Activated CD4-positive, alpha-beta T cell treated with anti-CD3 and anti-CD28 coated beads, Interleukin-2, amount 10 ng/mL, durations not matched to agents 7 days and 5 days (primary cell): ENCODE measurements at regions of chrX and their contacts with region 1.

Region 1: GRCh38 chrX:154373340-154374306 is 811 bp downstream of the FLNA start:
- DNase-seq: peak; percentile 37
- H3K4me3 Mint-ChIP-seq: peak overlapping the region; percentile 76
- H3K27ac Mint-ChIP-seq: peak overlapping the region; percentile 73
- H3K4me1 Mint-ChIP-seq: peaks cover 26% of the 10 kb centered on the region
- H3K27me3 Mint-ChIP-seq: no peaks in the 10 kb centered on the region

Region 2: GRCh38 chrX:154362085-154362742 is 11.4 kb before region 1 on chrX:
- CTCF ChIA-PET with region 1: interaction called, 11 read pairs
- POLR2A ChIA-PET with region 1: no interaction called
- DNase-seq: no peak
- H3K4me3 Mint-ChIP-seq: no peak overlapping the region
- H3K27ac Mint-ChIP-seq: no peak overlapping the region
- H3K4me1 Mint-ChIP-seq: peaks cover 21% of the 10 kb centered on the region
- H3K27me3 Mint-ChIP-seq: no peaks in the 10 kb centered on the region

Region 3: DNA sequence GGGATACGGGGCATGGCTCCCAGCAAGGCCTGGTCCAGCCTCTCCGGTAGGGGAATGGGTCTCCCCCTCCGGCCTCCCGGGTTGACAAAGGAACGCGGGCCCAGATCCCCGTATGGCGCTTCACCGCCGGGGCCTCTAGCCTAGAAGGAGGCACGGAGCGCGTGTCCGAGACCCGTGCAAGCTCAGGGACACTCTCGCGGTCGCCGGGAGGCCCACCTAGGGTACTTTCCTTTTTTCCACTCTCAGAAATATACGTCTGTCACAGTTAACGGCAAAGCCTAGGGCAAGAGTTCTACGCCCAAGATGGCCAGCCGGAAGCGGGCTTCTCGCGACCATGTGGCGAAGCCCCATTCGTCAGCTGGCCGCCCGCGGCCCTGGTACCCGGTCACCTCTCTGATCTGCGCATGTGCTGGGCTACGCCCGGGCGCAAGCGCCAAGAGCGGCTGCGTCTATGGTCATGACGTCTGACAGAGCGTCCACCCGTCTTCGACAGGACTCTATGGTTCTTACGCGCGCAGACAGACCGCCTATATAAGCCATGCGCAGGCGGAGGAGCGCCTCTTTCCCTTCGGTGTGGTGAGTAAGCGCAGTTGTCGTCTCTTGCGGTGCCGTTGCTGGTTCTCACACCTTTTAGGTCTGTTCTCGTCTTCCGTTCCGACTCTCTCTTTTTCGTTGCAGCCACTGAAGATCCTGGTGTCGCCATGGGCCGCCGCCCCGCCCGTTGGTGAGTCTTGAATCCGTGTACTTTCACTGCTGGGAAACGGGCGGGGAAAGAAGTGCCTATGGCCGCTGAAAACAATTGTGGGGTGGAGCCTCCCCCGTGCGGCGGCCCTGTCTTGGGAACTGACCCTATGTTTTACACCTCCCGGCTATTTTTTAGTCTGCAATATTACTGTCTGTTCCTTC is 24.4 kb after region 1 on chrX and contains the start of gene RPL10:
- CTCF ChIA-PET with region 1: interaction called, 10 read pairs
- POLR2A ChIA-PET with region 1: no interaction called
- DNase-seq: peak; percentile 91
- H3K4me3 Mint-ChIP-seq: peak within 1 kb of the TSS; percentile 96
- H3K27ac Mint-ChIP-seq: peak within 1 kb of the TSS; percentile 100
- H3K4me1 Mint-ChIP-seq: peaks cover 13% of the 10 kb centered on the region
- H3K27me3 Mint-ChIP-seq: no peaks in the 10 kb centered on the region
- total RNA-seq, gene RPL10: 1,884 to 2,727 TPM

Region 4: DNA sequence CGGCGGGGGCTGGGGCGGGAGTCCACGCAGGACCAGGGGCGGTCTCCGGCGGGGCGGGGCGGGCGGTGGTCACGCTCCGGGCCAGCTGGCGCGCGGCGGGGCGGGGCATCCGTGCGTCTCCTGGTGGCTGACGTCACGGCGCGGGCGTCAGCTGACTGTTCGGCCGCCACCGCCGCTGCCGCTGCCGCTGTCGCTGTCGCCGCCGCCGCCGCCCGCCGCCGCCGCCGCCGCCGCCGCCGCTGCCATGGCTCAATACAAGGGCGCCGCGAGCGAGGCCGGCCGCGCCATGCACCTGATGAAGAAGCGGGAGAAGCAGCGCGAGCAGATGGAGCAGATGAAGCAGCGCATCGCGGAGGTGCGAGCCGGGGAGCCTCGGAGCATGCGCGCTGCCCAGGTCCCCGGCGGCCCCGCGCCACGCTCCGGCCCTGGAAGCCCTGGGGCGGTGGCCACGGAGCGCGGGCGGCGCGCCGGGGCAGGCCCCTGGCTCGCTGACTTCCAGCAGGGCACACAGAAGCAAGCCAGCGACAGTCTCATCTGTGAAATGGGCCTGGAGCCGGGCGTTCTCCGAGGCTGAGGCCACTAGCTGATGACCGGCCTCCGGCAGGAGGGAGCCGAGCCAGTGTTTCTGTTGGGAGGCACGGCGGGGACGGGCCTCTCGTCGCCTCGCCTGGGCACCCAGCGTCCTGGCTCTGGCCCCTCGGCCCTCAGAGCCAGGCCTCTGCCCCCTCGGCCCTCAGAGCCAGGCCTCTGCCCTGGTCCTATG is 70.5 kb after region 1 on chrX and contains the start of gene FAM50A:
- CTCF ChIA-PET with region 1: no interaction called
- POLR2A ChIA-PET with region 1: no interaction called
- DNase-seq: peak; percentile 66
- H3K4me3 Mint-ChIP-seq: peak within 1 kb of the TSS; percentile 70
- H3K27ac Mint-ChIP-seq: peak within 1 kb of the TSS; percentile 84
- H3K4me1 Mint-ChIP-seq: peaks cover 22% of the 10 kb centered on the region
- H3K27me3 Mint-ChIP-seq: no peaks in the 10 kb centered on the region
- total RNA-seq, gene FAM50A: 54.3 to 66.9 TPM

Region 5: DNA sequence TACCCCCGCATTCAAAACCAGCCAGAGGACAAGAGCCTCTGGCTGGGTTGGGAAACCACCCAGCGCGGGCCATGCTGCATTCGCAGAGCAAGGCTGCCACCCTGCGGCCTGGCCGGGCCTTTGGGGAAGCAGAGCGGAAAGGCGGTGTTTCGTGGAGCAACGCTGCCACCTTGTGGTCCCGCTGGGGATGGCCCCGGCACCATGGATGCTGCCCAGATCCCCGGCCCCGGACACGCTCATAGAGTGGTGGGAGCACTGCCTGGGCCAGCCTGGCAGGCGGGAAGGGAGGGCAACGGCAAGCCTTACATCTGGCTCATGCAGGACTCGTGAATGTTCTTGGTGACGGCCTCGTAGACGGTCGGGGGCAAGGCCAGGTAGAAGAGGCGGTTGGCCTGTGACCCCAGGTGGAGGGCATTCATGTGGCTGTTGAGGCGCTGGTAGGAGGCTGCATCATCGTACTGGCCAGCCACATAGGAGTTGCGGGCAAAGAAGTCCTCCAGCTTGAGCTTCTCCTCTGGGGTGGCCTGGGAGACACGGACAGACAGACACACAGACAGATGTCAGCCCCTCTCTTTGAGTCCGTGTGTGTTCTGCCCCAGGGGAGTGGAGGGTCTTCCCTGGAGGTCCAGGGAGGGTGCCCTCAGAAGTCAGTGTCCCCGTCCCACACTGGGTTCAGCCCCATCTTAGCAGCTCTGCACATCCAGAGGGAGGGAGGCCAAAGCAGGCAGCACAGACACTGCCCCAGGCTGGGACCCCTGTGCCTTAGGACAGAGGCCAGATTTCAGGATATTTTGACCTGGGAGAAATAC is 161.4 kb after region 1 on chrX:
- CTCF ChIA-PET with region 1: interaction called, 15 read pairs
- POLR2A ChIA-PET with region 1: no interaction called
- DNase-seq: peak; percentile 88
- H3K4me3 Mint-ChIP-seq: no peak overlapping the region
- H3K27ac Mint-ChIP-seq: peak overlapping the region; percentile 66
- H3K4me1 Mint-ChIP-seq: peaks cover 13% of the 10 kb centered on the region
- H3K27me3 Mint-ChIP-seq: no peaks in the 10 kb centered on the region